Mammary epithelial cell (primary cell): ENCODE measurements at regions of chr20 and their contacts with region 1.

Region 1: DNA sequence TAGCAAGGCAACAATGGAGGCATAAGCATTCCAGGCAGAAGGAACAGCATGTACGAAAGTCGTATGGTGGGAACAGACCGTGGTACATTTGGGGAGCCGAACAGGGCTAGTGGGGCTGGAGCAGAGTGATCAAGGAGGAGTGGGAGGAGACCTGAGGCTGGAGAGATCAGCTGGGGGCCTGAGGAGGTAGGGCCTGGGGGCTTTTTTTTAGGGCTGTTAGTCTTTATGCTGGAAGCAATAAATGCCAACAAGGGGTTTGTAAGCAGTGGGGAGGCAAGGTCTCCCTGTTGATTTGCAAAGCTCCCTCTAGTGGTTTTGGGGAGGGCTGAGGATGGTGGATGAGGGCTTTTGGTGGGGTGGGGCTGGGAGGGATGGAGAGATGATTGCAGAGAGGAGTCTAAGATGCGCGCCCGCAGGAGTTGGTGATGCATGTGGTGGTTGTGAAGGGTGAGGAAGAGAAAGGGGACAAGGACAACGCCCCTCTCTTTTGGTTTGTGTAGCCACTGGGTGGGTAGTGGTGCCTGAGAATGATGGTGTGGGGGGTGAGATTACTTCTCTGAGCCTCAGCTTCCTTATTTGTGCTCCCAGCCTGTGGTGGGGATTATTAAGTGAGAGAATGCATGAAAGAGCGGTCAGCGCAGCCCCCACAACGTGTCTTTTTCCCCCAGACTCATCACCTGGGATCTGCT is 74.1 kb upstream of the TOX2 start:
- DNase-seq: no peak
- H3K4me3 ChIP-seq: no peak overlapping the region
- H3K27ac ChIP-seq: no peak overlapping the region
- H3K4me1 ChIP-seq: peaks cover 7% of the 10 kb centered on the region
- H3K27me3 ChIP-seq: no peaks in the 10 kb centered on the region
- CTCF ChIP-seq: peak; percentile 22 to 54

Region 2: DNA sequence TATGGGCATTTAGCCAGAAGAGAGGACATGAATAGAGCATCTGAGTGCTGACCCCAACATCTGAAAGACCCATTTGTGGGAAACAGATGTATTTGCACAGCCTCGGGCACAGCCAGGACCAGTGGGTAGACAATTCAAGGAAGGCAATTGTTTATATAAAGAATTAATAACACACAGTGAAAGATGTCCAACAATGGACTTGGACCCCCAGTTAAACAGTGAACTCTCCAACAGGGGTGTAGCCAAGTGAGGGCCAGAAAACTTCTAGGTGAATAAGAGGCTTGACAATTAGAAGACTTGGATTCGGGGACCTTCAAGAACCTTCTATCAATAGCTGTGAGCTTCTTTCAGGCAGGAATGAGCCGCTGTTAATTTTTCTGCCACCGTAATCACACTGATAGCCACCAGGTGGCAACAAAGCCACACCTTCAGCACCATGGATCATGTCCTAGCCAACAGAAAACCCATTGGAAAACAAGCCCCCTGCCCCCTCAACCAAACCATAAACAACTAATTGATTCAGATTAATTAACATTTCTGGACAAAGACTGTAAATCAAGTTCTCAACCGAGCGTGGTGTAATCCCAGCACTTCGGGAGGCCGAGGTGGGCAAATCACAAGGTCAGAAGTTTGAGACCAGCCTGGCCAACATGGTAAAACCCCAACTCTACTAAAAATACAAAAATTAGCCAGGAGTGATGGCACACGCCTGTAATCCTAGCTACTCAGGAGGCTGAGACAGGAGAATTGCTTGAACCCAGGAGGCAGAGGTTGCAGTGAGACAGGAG is 391.6 kb before region 1 on chr20:
- CTCF ChIA-PET with region 1: no interaction called
- dilution Hi-C with region 1: no loop called
- in situ Hi-C with region 1: no loop called
- intact Hi-C with region 1: loop called (anchors 5 kb)
- DNase-seq: peak; percentile 26
- H3K4me3 ChIP-seq: no peak overlapping the region
- H3K27ac ChIP-seq: no peak overlapping the region
- H3K4me1 ChIP-seq: no peaks in the 10 kb centered on the region
- H3K27me3 ChIP-seq: no peaks in the 10 kb centered on the region
- CTCF ChIP-seq: peak; percentile 79 to 88

Region 3: GRCh38 chr20:43749734-43750294 is 90.7 kb before region 1 on chr20:
- CTCF ChIA-PET with region 1: interaction called, 3 read pairs
- dilution Hi-C with region 1: no loop called
- in situ Hi-C with region 1: no loop called
- intact Hi-C with region 1: loop called (anchors 1 kb)
- DNase-seq: peak; percentile 57
- H3K4me3 ChIP-seq: no peak overlapping the region
- H3K27ac ChIP-seq: no peak overlapping the region
- H3K4me1 ChIP-seq: peaks cover 22% of the 10 kb centered on the region
- H3K27me3 ChIP-seq: no peaks in the 10 kb centered on the region
- CTCF ChIP-seq: peak; percentile 85 to 99

Region 4: GRCh38 chr20:43914311-43915210 is 74.0 kb after region 1 on chr20 and contains the start of gene TOX2:
- CTCF ChIA-PET with region 1: no interaction called
- dilution Hi-C with region 1: no loop called
- in situ Hi-C with region 1: no loop called
- intact Hi-C with region 1: loop called (anchors 5 kb)
- DNase-seq: no peak
- H3K4me3 ChIP-seq: peak within 1 kb of the TSS in 2 of 3 experiments; percentile 47 to 48
- H3K27ac ChIP-seq: no peak within 1 kb of the TSS
- H3K4me1 ChIP-seq: peaks cover 16% of the 10 kb centered on the region
- H3K27me3 ChIP-seq: peaks cover 15% of the 10 kb centered on the region
- CTCF ChIP-seq: no peak
- total RNA-seq, gene TOX2: 0.83 to 5.0 TPM

Region 5: GRCh38 chr20:43983359-43983758 is 142.8 kb after region 1 on chr20:
- CTCF ChIA-PET with region 1: no interaction called
- dilution Hi-C with region 1: no loop called
- in situ Hi-C with region 1: no loop called
- intact Hi-C with region 1: loop called (anchors 10 kb)
- DNase-seq: no peak
- H3K4me3 ChIP-seq: no peak overlapping the region
- H3K27ac ChIP-seq: no peak overlapping the region
- H3K4me1 ChIP-seq: no peaks in the 10 kb centered on the region
- H3K27me3 ChIP-seq: no peaks in the 10 kb centered on the region
- CTCF ChIP-seq: peak in 1 of 2 donors; percentile 33

Region 6: GRCh38 chr20:44028868-44029847 is 188.6 kb after region 1 on chr20:
- CTCF ChIA-PET with region 1: no interaction called
- dilution Hi-C with region 1: no loop called
- in situ Hi-C with region 1: no loop called
- intact Hi-C with region 1: no loop called
- DNase-seq: no peak
- H3K4me3 ChIP-seq: no peak overlapping the region
- H3K27ac ChIP-seq: no peak overlapping the region
- H3K4me1 ChIP-seq: no peaks in the 10 kb centered on the region
- H3K27me3 ChIP-seq: peaks cover 3% of the 10 kb centered on the region
- CTCF ChIP-seq: no peak

Region 7: DNA sequence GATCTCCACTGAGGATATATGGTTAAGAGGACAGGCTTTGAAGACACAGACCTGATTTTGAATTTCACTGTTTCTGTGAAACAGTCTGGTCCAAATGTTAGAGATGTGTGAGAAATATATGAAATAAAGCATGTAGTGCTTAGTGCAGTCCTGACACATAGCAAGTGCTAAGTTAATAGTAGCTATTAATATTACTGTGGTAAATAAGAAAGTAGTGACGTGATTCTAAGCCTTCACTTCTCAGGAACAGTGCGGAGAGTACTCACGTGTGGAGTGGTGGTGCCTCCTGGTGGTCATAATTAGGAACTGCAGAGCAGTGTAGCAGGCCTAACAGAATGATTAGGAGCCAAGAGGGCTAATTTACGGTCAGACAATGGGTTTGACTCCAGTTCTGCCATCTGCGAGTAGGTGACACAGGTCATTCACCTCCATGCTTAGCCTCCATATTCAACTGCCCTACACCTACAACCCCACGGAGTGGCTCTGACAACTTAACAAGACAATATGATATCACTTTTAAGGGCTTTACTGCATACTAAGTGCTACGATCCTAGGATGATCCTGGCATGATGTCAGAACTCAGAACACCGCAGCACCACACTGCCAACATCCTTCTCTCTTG is 240.2 kb after region 1 on chr20:
- CTCF ChIA-PET with region 1: interaction called, 6 read pairs
- dilution Hi-C with region 1: no loop called
- in situ Hi-C with region 1: loop called in 1 of 2 experiments (anchors 10 kb)
- intact Hi-C with region 1: loop called (anchors 1 kb)
- DNase-seq: peak; percentile 57
- H3K4me3 ChIP-seq: no peak overlapping the region
- H3K27ac ChIP-seq: no peak overlapping the region
- H3K4me1 ChIP-seq: peaks cover 8% of the 10 kb centered on the region
- H3K27me3 ChIP-seq: no peaks in the 10 kb centered on the region
- CTCF ChIP-seq: peak; percentile 92 to 100

Region 8: GRCh38 chr20:44660581-44660980 is 820.1 kb after region 1 on chr20:
- CTCF ChIA-PET with region 1: no interaction called
- dilution Hi-C with region 1: no loop called
- in situ Hi-C with region 1: no loop called
- intact Hi-C with region 1: no loop called
- DNase-seq: peak; percentile 81
- H3K4me3 ChIP-seq: no peak overlapping the region
- H3K27ac ChIP-seq: no peak overlapping the region
- H3K4me1 ChIP-seq: peaks cover 7% of the 10 kb centered on the region
- H3K27me3 ChIP-seq: no peaks in the 10 kb centered on the region
- CTCF ChIP-seq: no peak